Esophagus muscularis mucosa (tissue), 4 donors: ENCODE measurements at regions of chr3 and their contacts with region 1.

Region 1: DNA sequence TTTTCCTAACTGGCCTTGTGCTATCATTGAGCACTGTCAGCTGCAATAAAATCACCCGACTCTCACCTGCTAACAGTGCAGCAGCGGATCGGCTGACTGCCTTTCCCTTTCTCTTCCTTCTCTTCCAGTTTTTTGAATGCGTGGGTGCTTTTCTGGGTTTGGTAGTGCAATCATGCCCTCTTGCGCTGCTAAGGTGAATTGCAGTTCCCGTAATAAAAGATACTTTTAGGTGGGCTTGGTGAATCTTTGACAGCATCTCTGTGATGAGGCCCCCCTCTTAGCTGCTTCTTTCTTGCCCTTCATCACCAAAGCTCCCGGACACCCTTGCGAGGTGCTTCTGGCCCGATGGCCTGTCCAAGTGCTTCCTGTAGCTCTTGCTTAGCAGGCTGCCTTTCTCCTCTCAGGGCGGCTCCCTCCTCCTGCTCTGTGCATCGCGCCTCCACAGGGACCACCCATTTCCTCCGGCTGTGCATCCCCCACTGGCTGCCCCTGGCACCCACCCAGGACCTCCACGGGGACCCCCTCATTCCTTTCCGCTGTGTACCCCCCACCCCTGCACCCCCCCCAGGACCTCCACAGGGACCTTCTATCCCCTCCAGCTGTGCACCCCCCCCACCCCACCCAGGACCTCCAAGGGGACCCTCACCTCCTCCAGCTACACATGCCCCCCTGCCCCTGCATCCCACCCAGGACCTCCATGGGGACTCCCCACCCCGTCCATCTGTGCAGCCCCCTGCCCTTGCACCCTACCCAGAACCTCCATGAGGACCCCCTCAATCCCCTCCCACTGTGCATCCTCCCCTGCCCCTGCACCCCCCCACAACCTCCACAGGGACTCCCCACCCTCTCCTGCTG is 50.8 kb upstream of the RPL32 start:
- DNase-seq: no peak
- H3K4me3 ChIP-seq: peak overlapping the region; percentile 29 to 48 (median 36)
- H3K27ac ChIP-seq: no peak overlapping the region
- H3K4me1 ChIP-seq: peaks cover 31 to 55% (median 50%) of the 10 kb centered on the region in 4 donors
- H3K27me3 ChIP-seq: no peaks in the 10 kb centered on the region
- CTCF ChIP-seq: peak; percentile 81 to 96 (median 95)
- EP300 ChIP-seq: no peak
- POLR2A ChIP-seq: no peak

Region 2: DNA sequence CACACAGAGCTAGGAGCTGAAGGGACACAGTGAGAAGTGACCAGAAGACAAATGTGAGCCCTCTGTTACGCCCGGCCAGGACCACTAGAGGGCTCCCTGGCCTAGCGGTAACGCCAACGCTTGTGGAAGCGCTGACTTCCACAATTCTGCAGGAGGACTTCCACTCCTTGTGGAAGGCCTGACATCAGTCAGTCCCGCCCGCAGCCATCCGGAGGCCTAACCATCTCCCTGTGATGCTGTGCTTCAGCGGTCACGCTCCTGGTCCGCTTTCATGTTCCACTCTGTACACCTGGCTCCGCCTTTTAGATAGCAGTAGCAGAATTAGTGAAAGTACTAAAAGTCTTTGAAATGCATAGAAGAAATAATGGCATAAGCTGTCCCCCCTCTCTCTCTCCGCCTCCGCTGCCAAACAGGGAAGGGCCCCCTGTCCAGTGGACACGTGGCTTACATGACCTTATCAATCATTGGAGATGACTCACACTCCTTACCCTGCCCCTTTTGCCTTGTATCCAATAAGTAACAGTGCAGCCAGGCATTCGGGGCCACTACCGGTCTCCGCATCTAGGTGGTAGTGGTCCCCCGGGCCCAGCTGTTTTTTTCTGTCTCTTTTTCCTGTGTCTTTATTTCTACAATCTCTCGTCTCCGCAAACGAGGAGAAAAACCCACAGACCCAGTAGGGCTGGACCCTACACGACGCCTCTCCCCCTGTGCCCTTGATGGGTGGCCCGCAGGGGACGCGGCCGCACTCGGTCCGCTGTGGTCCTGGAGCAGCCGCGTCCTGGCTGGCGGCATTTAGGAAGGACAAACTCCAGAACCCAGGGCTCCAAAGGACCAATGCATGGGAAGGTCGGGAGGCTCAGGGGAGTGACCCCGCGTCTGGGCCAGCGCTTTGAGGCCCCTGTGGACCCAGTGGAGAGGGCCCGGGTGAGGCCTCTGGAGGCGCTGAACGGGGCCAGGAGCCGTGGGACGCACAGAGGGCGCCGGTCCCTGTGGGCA is 23.9 kb before region 1 on chr3:
- intact Hi-C with region 1: loop called (anchors 1 kb)
- DNase-seq: no peak
- H3K4me3 ChIP-seq: peak overlapping the region; percentile 16 to 40 (median 34)
- H3K27ac ChIP-seq: peak overlapping the region in 2 of 4 donors; percentile 31 to 48
- H3K4me1 ChIP-seq: peaks cover 11 to 15% (median 14%) of the 10 kb centered on the region in 4 donors
- H3K27me3 ChIP-seq: peaks cover 0 to 5% (median 0%) of the 10 kb centered on the region in 4 donors
- CTCF ChIP-seq: peak; percentile 90 to 95 (median 93)
- EP300 ChIP-seq: no peak
- POLR2A ChIP-seq: no peak